Colonic mucosa (tissue), 4 donors: ENCODE measurements at regions of chr5 and their contacts with region 1.

Region 1: DNA sequence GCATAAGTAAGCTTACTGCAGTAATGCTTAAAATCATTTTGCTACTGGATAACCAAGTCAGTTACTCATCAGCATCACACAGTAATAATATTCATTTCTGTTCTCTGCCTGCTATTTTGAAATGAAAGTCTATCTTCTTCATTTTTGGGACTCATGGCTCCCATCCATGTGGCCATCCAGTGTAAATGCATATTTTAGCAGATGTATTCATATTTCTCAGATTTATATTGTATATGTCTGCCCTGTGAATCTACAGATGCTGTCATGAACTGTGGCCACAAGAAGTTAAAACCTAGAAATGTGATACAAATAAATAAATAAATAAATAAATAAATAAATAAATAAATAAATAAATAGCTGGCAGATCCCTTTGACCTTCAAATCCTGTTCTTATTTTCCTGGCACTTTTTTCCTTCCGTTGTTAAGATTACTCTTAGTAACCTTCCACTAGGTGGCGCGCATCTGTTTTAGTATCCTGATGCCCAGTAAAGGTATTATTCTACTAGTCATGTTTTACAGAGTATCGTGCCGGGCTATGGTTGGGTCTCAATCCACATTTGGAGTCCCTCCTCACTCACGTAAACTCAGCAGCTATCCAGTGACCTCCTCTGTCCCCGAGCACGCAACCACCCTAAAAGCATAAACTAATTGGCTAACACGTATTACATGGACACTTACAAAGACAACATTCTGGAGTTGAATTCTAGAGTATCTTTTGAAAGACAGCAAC is 79.2 kb upstream of the IL7R start:
- DNase-seq: peak; percentile 67
- H3K4me3 ChIP-seq: no peak overlapping the region
- H3K27ac ChIP-seq: no peak overlapping the region
- H3K4me1 ChIP-seq: no peaks in the 10 kb centered on the region
- H3K27me3 ChIP-seq: no peaks in the 10 kb centered on the region
- CTCF ChIP-seq: peak; percentile 56

Region 2: GRCh38 chr5:35815089-35815936 is 37.8 kb after region 1 on chr5:
- intact Hi-C with region 1: loop called (anchors 5 kb)
- DNase-seq: peak; percentile 49
- H3K4me3 ChIP-seq: no peak overlapping the region
- H3K27ac ChIP-seq: no peak overlapping the region
- H3K4me1 ChIP-seq: no peaks in the 10 kb centered on the region
- H3K27me3 ChIP-seq: no peaks in the 10 kb centered on the region
- CTCF ChIP-seq: peak; percentile 73

Region 3: GRCh38 chr5:35908228-35908627 is 130.7 kb after region 1 on chr5:
- intact Hi-C with region 1: no loop called
- DNase-seq: no peak
- H3K4me3 ChIP-seq: no peak overlapping the region
- H3K27ac ChIP-seq: no peak overlapping the region
- H3K4me1 ChIP-seq: no peaks in the 10 kb centered on the region
- H3K27me3 ChIP-seq: no peaks in the 10 kb centered on the region
- CTCF ChIP-seq: no peak

Region 4: DNA sequence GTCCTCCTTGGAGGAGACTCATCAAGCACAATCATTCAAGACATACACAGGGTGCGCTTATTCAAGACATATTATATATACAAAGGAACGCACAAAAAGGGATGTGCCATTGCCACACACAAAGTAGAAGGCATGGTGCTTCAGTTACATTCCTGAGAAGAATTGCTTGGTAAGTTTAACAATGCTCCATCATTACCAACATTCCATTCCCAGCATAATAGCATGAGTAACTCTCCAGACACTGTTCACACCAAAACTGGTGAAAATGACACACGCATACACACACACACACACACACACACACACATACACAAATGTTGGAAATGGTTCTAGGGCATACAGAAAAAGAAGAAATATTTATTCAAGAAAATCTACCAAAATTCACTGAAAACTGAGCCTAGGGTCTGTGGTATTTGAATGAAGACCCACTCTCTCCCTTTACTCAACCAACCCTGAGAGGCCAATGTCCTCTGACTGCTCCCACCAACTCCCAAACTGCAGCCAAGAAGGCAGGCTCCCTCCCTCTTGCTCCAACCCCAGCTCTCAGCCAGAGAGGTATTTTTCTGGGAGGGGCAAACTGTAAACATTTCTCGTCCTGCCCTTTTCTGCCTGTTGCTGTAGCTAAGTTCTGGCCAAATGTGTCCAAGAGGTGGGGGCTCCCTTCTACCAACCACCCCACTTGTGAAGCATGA is 193.8 kb after region 1 on chr5:
- intact Hi-C with region 1: no loop called
- DNase-seq: no peak
- H3K4me3 ChIP-seq: no peak overlapping the region
- H3K27ac ChIP-seq: no peak overlapping the region
- H3K4me1 ChIP-seq: no peaks in the 10 kb centered on the region
- H3K27me3 ChIP-seq: no peaks in the 10 kb centered on the region
- CTCF ChIP-seq: no peak